ENCODE measurements at regions of chr1 and their contacts with region 1.

Region 1: DNA sequence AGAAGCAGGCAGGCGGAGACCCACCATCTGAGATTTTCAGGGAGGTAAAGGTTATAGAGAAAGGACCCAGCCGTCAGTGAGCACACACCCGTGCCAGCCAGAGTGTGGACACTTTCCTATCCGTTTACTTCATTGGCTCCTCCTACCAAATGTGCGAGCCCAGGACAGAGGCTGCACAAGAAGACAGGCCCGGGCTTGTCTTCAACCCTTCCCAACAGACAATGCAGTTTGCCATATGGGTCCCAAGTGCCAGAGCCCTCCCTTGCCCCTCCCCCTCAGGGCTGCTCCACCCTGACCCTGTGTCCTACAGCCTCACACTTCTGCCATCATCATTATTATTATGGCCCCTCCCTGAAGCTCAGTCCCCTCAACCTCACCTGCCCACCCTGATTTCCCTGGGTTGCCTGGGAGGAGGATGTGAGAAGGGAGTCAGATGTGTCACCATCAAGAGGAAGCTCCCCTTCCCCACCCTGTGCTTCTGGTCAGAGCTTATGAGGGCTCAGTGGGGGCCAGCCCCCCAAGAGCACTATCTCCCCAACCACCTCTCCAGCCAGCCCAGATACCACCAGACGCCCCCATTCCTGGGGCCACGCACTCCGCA is 9.4 kb downstream of the LAPTM5 start:
- DNase-seq: peak in 7 of 10 donors; percentile 54 to 79 (median 67)
- H3K4me3 ChIP-seq: peak overlapping the region in 9 of 59 donors; percentile 6 to 48 (median 29)
- H3K27ac ChIP-seq: peak overlapping the region in 55 of 59 donors; percentile 6 to 100 (median 93)
- H3K27me3 ChIP-seq: no peaks in the 10 kb centered on the region
- CTCF ChIP-seq: no peak

Region 2: DNA sequence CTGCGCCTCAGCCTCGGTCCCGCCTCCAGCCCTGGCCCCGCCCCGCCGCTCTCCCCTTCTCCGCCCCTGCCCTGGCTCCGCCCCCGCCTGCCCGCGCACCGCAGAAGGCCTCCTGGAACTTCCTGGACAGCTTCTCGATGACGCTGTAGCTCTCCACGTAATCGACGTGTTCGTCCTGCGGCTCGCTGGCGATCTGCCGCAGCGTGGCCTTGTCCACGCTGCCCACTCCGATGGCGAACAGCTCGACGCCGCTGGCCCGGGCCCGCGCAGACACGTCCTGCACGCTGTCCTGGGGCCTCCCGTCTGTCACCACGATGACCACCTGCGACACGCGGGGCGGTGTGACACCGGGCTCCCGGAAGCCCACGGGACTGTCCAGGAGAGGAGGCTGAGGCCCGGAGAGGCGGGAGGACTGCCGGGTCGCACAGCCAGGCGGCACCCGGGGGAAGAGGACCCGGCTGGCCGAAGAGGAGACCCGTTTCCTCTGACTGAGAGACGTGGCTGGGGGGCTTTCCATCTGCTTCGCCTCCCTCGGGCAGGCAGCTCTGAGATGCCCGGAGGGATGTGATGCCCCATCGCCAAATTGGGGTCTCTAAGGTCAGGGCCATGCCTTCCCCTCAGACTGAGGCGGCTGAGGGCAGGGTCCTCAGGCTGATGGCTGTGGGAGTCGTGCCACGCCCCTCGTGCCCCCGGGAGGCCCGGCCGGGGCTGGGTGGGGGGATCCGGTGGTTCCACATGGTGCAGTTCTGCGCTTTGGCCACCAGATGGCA is 29.4 kb before region 1 on chr1:
- intact Hi-C with region 1: loop called in 1 of 2 experiments (anchors 2 kb)
- DNase-seq: peak in 5 of 10 donors; percentile 46 to 96 (median 86)
- H3K4me3 ChIP-seq: peak overlapping the region; percentile 51 to 88 (median 69)
- H3K27ac ChIP-seq: peak overlapping the region; percentile 91 to 100 (median 99)
- H3K27me3 ChIP-seq: no peaks in the 10 kb centered on the region
- CTCF ChIP-seq: peak in 55 of 56 donors; percentile 94 to 100 (median 99)

Measured in dorsolateral prefrontal cortex (tissue), 120 donors.